ENCODE measurements at regions of chr16 and their contacts with region 1.

Region 1: GRCh38 chr16:87956365-87957231 is 5.4 kb downstream of the BANP start:
- DNase-seq: peak; percentile 54
- H3K4me3 ChIP-seq: no peak overlapping the region
- H3K27ac ChIP-seq: peak overlapping the region; percentile 72
- H3K4me1 ChIP-seq: peaks cover 40% of the 10 kb centered on the region
- H3K27me3 ChIP-seq: no peaks in the 10 kb centered on the region
- CTCF ChIP-seq: peak; percentile 29 to 39
- POLR2A ChIP-seq: no peak

Region 2: DNA sequence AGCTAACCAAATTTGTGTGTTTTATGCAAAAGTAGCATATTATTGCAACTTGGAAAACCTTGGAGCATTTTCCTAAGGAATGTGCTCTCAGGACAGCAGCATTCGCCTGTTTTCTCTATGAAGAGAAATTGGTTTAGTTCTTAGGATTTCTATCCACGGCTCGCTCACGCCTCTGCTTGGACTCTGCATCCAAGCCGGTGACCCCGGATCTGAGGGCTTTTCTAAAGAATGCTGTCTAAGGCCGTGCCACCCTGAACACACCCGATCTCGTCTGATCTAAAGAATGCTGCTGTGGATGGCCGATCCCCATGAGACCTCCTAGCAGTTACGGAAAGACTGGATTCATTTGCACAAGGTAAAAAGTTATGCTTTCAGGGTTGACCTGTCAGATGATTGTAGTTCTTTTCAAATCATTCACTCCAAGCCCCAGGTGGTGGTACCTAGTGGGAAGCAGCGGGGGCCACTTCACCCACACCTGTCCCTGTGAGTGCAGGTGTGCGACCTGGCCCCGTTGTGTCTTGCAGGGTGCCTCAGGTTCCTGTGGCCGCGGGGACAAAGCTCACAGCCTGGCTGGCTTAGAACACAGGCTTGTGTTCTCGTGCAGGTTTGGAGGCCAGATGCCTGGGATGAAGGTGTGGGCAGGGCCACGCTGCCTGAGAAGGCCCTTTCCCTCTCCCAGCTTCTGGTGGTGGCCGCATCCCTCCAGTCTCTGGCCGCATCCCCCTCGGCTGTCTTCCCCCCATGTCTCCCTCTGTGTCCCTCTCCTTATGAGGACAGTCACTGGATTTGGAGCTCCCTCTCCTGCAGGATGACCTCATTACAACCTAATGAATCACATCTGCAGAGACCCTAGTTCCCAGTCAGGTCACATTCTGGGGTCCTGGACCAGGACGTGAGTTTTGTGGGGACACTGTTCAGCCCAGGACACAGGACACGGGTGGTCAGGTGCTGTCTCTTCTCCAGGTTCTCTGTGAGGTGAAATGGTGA is 65.8 kb after region 1 on chr16:
- CTCF ChIA-PET with region 1: no interaction called
- POLR2A ChIA-PET with region 1: no interaction called
- dilution Hi-C with region 1: no loop called
- intact Hi-C with region 1: loop called (anchors 5 kb)
- DNase-seq: no peak
- H3K4me3 ChIP-seq: no peak overlapping the region
- H3K27ac ChIP-seq: no peak overlapping the region
- H3K4me1 ChIP-seq: peaks cover 7% of the 10 kb centered on the region
- H3K27me3 ChIP-seq: no peaks in the 10 kb centered on the region
- CTCF ChIP-seq: no peak
- POLR2A ChIP-seq: no peak